IMR-90 (cell line): ENCODE measurements at regions of chr4 and their contacts with region 1.

Region 1: GRCh38 chr4:73197220-73197619 is 61.4 kb downstream of the ANKRD17 start:
- DNase-seq: peak; percentile 33
- ATAC-seq: peak; percentile 40; the same call in 1 of the 2 replicates
- H3K4me3 ChIP-seq: no peak overlapping the region
- H3K27ac ChIP-seq: peak overlapping the region; percentile 72; the same call in 1 of the 2 replicates
- H3K4me1 ChIP-seq: peaks cover 15% of the 10 kb centered on the region
- H3K27me3 ChIP-seq: no peaks in the 10 kb centered on the region
- CTCF ChIP-seq: no peak
- POLR2A ChIP-seq: no peak
- RAD21 ChIP-seq: no peak

Region 2: DNA sequence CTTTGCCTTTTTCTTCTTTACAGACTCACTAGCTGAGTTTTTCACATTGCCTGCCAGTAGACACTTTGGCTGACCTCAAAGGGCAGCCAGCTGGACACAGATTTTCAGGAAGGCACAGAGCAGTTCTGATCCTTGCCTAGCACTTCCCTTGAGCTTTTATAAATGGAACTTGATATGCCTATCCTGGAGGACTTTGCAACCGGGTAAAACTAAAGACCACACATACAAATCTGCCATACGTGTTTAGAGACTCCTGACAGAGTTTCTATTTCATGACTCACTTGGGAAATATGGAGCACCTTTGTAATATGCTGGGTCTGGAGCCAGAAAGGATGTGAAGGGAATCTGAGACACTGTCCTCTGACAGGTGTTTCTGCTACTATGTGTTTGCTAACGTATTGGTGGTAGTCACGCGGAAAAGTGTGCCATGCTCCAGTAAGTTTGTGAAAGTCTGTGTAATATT is 479.7 kb after region 1 on chr4:
- CTCF ChIA-PET with region 1: no interaction called
- POLR2A ChIA-PET with region 1: interaction called, 13 read pairs
- dilution Hi-C with region 1: no loop called
- in situ Hi-C with region 1: no loop called
- intact Hi-C with region 1: no loop called
- DNase-seq: peak; percentile 88
- ATAC-seq: peak; percentile 87
- H3K4me3 ChIP-seq: no peak overlapping the region
- H3K27ac ChIP-seq: no peak overlapping the region
- H3K4me1 ChIP-seq: 0 out of 2 replicates have a peak, but pooled peaks cover 2% of the 10 kb centered on the region
- H3K27me3 ChIP-seq: no peaks in the 10 kb centered on the region
- CTCF ChIP-seq: no peak
- POLR2A ChIP-seq: no peak
- RAD21 ChIP-seq: no peak